ENCODE measurements at regions of chr16 and their contacts with region 1.

Region 1: GRCh38 chr16:19118938-19119431 is 5.2 kb downstream of the ITPRIPL2 start:
- DNase-seq: peak; percentile 88
- H3K4me3 ChIP-seq: peak overlapping the region; percentile 6 to 49 (median 7)
- H3K27ac ChIP-seq: peak overlapping the region; percentile 85
- H3K4me1 ChIP-seq: peaks cover 49% of the 10 kb centered on the region
- H3K27me3 ChIP-seq: no peaks in the 10 kb centered on the region
- CTCF ChIP-seq: no peak
- POLR2A ChIP-seq: no peak

Region 2: GRCh38 chr16:19046062-19046461 is 72.9 kb before region 1 on chr16:
- CTCF ChIA-PET with region 1: no interaction called
- POLR2A ChIA-PET with region 1: no interaction called
- dilution Hi-C with region 1: no loop called
- intact Hi-C with region 1: no loop called
- DNase-seq: no peak
- H3K4me3 ChIP-seq: no peak overlapping the region
- H3K27ac ChIP-seq: no peak overlapping the region
- H3K4me1 ChIP-seq: no peaks in the 10 kb centered on the region
- H3K27me3 ChIP-seq: no peaks in the 10 kb centered on the region
- CTCF ChIP-seq: no peak
- POLR2A ChIP-seq: no peak

Region 3: DNA sequence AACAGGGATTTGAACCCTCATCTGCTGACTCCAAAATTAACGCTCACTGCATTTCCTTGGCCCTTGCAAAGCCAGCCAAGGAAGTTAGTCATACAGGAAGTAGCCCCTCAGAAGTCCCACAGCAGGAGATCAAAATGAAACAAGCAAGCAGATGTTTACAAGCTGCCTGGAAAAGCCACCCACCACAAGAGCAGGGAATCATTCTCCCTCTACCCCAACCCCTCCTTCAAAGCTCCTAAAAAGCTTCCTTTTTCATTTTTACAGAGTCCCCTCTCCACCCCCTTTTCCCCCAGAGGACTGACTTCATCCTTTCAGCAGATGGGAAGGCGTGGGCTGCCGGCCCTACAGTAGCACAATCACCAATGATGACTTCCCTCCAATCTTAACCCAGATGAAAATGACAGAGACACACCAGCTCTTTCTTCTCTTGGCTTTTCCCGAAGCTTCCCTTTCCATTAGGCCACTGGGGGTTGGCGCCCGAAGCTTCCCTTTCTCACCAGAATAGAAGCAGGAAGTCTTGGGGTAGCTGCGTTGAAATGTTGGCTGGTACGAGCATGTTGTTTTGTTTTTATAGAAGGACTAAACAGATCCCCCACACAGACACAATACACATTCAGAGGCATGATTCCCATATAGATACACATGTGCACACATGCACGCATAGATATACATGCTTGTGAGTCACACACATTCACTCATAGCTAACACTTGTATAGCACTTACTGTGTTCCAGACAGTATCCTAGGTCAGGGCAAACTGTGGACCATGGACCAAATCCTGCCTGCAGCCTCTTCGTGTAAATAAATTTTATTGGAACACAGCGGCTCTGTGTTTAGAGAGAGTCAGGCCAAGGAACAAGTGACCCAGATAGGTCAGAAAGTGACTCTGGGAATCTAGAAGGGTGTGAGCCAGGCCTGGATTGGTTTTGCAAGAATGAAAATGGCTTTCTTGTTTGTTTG is 12.1 kb after region 1 on chr16:
- CTCF ChIA-PET with region 1: interaction called, 9 read pairs
- POLR2A ChIA-PET with region 1: interaction called, 5 read pairs
- dilution Hi-C with region 1: no loop called
- intact Hi-C with region 1: loop called (anchors 1 kb)
- DNase-seq: peak; percentile 61
- H3K4me3 ChIP-seq: peak overlapping the region in 2 of 3 experiments; percentile 10 to 43
- H3K27ac ChIP-seq: peak overlapping the region; percentile 99
- H3K4me1 ChIP-seq: peaks cover 22% of the 10 kb centered on the region
- H3K27me3 ChIP-seq: no peaks in the 10 kb centered on the region
- CTCF ChIP-seq: no peak
- POLR2A ChIP-seq: no peak

Region 4: GRCh38 chr16:19184823-19185509 is 66.0 kb after region 1 on chr16:
- CTCF ChIA-PET with region 1: interaction called, 37 read pairs
- POLR2A ChIA-PET with region 1: no interaction called
- dilution Hi-C with region 1: no loop called
- intact Hi-C with region 1: loop called (anchors 2 kb)
- DNase-seq: peak; percentile 17
- H3K4me3 ChIP-seq: no peak overlapping the region
- H3K27ac ChIP-seq: no peak overlapping the region
- H3K4me1 ChIP-seq: peaks cover 6% of the 10 kb centered on the region
- H3K27me3 ChIP-seq: no peaks in the 10 kb centered on the region
- CTCF ChIP-seq: no peak
- POLR2A ChIP-seq: no peak

Measured in endothelial cell of umbilical vein (primary cell).